A549 (cell line): ENCODE measurements at regions of chr15 and their contacts with region 1.

Region 1: DNA sequence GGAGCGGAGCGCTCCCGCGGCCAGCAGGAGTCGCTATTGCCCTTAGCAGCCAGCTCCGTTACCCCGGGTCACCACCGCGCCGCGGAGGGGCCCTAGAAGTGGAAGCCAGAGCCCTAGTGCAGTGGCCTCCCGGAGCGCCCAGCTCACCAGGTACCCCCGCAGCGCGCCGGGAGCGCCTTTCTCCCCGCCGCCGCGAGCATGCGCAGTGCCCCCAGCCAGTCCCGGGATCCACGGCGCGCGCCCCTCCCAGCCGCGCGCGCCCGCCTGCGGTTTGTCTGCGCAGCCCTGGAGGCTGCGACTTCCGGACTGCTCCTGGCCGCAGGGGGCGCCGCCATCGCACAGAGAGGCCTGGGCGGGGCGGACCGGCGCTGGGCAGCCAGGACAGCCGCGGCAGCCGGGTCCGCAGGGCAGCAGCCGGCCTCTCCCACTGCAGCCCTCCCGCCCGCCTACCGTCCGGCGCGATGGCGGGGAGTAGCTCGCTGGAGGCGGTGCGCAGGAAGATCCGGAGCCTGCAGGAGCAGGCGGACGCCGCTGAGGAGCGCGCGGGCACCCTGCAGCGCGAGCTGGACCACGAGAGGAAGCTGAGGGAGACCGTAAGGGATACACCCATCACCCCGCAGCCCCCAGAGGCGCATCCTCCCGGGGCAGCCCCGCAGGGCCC is 5.7 kb downstream of the TPM1 start:
- DNase-seq: peak; percentile 96 to 98
- ATAC-seq: peak; percentile 69 to 76
- H3K4me3 ChIP-seq: peak overlapping the region; percentile 87
- H3K27ac ChIP-seq: peak overlapping the region; percentile 94 to 97
- H3K4me1 ChIP-seq: peaks cover 66% of the 10 kb centered on the region
- CTCF ChIP-seq: peak; percentile 98
- EP300 ChIP-seq: peak in 1 of 2 experiments; percentile 50; a peak in 1 of 5 replicates
- POLR2A ChIP-seq: peak; percentile 63
- RAD21 ChIP-seq: peak; percentile 75 to 94

Region 2: GRCh38 chr15:62782039-62782791 is 266.0 kb before region 1 on chr15:
- CTCF ChIA-PET with region 1: interaction called, 86 read pairs
- POLR2A ChIA-PET with region 1: interaction called, 22 read pairs
- DNase-seq: peak; percentile 81 to 90
- ATAC-seq: peak; percentile 93 to 95
- H3K4me3 ChIP-seq: no peak overlapping the region
- H3K27ac ChIP-seq: peak overlapping the region; percentile 71 to 82
- H3K4me1 ChIP-seq: peaks cover 42% of the 10 kb centered on the region
- CTCF ChIP-seq: peak; percentile 98
- EP300 ChIP-seq: no peak
- POLR2A ChIP-seq: no peak
- RAD21 ChIP-seq: peak; percentile 100

Region 3: GRCh38 chr15:62886431-62887071 is 161.7 kb before region 1 on chr15:
- CTCF ChIA-PET with region 1: interaction called, 12 read pairs
- POLR2A ChIA-PET with region 1: interaction called, 4 read pairs
- DNase-seq: peak; percentile 41 to 46
- ATAC-seq: peak; percentile 53 to 68; a peak in 5 of 6 replicates
- H3K4me3 ChIP-seq: no peak overlapping the region
- H3K27ac ChIP-seq: peak overlapping the region; percentile 66 to 89
- H3K4me1 ChIP-seq: peaks cover 46% of the 10 kb centered on the region
- CTCF ChIP-seq: no peak
- EP300 ChIP-seq: no peak
- POLR2A ChIP-seq: no peak
- RAD21 ChIP-seq: no peak

Region 4: GRCh38 chr15:62940755-62941361 is 107.4 kb before region 1 on chr15:
- CTCF ChIA-PET with region 1: interaction called, 11 read pairs
- POLR2A ChIA-PET with region 1: interaction called, 5 read pairs
- DNase-seq: peak; percentile 60 to 75
- ATAC-seq: peak; percentile 73 to 84
- H3K4me3 ChIP-seq: no peak overlapping the region
- H3K27ac ChIP-seq: peak overlapping the region; percentile 67 to 87
- H3K4me1 ChIP-seq: peaks cover 30% of the 10 kb centered on the region
- CTCF ChIP-seq: no peak
- EP300 ChIP-seq: no peak
- POLR2A ChIP-seq: no peak
- RAD21 ChIP-seq: no peak

Region 5: DNA sequence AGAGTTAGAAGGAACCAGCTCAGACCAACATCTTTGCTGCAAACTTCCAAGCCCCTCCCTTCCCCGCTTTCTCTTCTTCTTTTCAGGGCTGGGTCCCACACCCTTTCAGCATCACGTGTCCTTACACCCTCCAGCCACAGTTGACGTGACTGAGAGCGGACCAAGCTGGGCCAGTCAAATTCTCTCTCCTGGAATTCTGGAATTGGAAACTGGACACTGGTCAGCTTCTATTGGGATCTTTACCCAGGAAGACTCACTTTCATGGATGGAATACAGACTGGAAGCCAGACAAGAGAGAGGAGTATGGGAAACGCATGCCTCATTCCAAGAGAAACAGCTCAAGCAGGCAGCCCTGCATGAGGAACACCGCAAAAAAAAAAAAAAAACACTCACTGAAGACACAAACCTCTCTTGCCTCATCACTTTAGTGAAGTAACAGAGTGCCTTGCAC is 18.1 kb before region 1 on chr15:
- CTCF ChIA-PET with region 1: interaction called, 78 read pairs
- POLR2A ChIA-PET with region 1: interaction called, 6 read pairs
- DNase-seq: no peak
- ATAC-seq: no peak
- H3K4me3 ChIP-seq: no peak overlapping the region
- H3K27ac ChIP-seq: 0 out of 6 replicates have a peak overlapping the region, but pooled peaks of 1 of the 2 experiments have one; percentile 3
- H3K4me1 ChIP-seq: no peaks in the 10 kb centered on the region
- CTCF ChIP-seq: no peak
- EP300 ChIP-seq: no peak
- POLR2A ChIP-seq: no peak
- RAD21 ChIP-seq: no peak

Region 6: GRCh38 chr15:63135804-63136203 is 87.6 kb after region 1 on chr15:
- CTCF ChIA-PET with region 1: interaction called, 10 read pairs
- POLR2A ChIA-PET with region 1: no interaction called
- DNase-seq: peak in 1 of 2 experiments; percentile 36
- ATAC-seq: peak; percentile 65 to 77; a peak in 5 of 6 replicates
- H3K4me3 ChIP-seq: no peak overlapping the region
- H3K27ac ChIP-seq: peak overlapping the region; percentile 37 to 71; a peak in 5 of 6 replicates
- H3K4me1 ChIP-seq: peaks cover 40% of the 10 kb centered on the region
- CTCF ChIP-seq: no peak
- EP300 ChIP-seq: no peak
- POLR2A ChIP-seq: no peak
- RAD21 ChIP-seq: no peak